Mammary epithelial cell (primary cell): ENCODE measurements at regions of chr22 and their contacts with region 1.

Region 1: DNA sequence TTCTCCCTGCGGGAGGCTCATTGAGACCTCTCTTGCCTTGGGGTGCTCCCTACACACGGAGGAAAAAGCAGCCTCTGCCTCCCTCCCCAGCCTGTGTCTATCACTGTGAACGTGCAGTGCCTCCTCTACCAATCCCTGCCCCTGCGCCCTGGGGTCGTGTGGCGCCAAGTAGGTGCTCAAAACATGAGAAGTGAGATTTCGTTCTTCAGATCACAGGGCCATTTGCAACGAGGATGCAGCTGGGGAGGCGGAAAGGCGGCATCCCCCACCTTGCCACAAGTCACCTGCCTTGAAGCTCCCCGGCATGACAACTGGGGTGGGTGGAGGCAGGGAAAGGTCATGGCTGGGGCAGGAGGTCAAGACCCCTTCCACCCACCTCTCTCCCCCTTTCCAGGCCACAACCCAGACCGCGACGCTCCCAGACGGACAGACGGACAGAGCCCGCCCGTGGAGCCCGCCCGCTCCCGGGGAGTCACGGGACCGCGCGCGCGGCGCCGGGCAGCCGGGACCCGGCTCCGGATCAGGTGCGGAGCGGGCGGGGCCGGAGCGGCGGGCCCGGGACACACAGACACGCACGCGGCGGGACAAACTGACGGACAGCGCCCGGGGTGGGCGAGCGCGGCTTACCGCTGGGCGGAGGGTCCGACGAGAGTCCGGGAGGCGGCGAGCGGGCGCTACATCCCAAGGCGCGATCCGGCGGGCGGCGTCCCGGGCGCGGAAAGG is 485 bp downstream of the KCNJ4 start:
- DNase-seq: no peak
- H3K4me3 ChIP-seq: peak overlapping the region in 2 of 3 experiments; percentile 25 to 26
- H3K27ac ChIP-seq: no peak overlapping the region
- H3K4me1 ChIP-seq: peaks cover 32% of the 10 kb centered on the region
- H3K27me3 ChIP-seq: peaks cover 10% of the 10 kb centered on the region
- CTCF ChIP-seq: no peak

Region 2: GRCh38 chr22:38412435-38413084 is 42.0 kb before region 1 on chr22:
- CTCF ChIA-PET with region 1: no interaction called
- dilution Hi-C with region 1: no loop called
- in situ Hi-C with region 1: no loop called
- intact Hi-C with region 1: loop called (anchors 5 kb)
- DNase-seq: no peak
- H3K4me3 ChIP-seq: peak overlapping the region in 1 of 3 experiments; percentile 24
- H3K27ac ChIP-seq: no peak overlapping the region
- H3K4me1 ChIP-seq: peaks cover 8% of the 10 kb centered on the region
- H3K27me3 ChIP-seq: no peaks in the 10 kb centered on the region
- CTCF ChIP-seq: peak; percentile 40 to 72